CD14-positive monocyte (primary cell): ENCODE measurements at regions of chr18 and their contacts with region 1.

Region 1: GRCh38 chr18:58043491-58044379 is at the start of gene NEDD4L:
- DNase-seq: peak; percentile 62 to 77 (median 63)
- H3K4me3 ChIP-seq: peak within 1 kb of the TSS; percentile 54 to 77 (median 72)
- H3K4me3 Mint-ChIP-seq: peak within 1 kb of the TSS; percentile 99
- H3K27ac ChIP-seq: peak within 1 kb of the TSS in 1 of 2 donors; percentile 45
- H3K27ac Mint-ChIP-seq: peak within 1 kb of the TSS in 6 of 7 donors; percentile 41 to 79 (median 76)
- H3K4me1 ChIP-seq: peaks cover 15 to 28% of the 10 kb centered on the region in 2 donors
- H3K4me1 Mint-ChIP-seq: peaks cover 31% of the 10 kb centered on the region
- H3K27me3 ChIP-seq: peaks cover 5 to 12% of the 10 kb centered on the region in 2 donors
- H3K27me3 Mint-ChIP-seq: peaks cover 26 to 38% (median 29%) of the 10 kb centered on the region in 3 donors
- CTCF ChIP-seq: peak; percentile 88
- polyA plus RNA-seq, gene NEDD4L: 2.5 to 5.2 (median 4.5) TPM

Region 2: DNA sequence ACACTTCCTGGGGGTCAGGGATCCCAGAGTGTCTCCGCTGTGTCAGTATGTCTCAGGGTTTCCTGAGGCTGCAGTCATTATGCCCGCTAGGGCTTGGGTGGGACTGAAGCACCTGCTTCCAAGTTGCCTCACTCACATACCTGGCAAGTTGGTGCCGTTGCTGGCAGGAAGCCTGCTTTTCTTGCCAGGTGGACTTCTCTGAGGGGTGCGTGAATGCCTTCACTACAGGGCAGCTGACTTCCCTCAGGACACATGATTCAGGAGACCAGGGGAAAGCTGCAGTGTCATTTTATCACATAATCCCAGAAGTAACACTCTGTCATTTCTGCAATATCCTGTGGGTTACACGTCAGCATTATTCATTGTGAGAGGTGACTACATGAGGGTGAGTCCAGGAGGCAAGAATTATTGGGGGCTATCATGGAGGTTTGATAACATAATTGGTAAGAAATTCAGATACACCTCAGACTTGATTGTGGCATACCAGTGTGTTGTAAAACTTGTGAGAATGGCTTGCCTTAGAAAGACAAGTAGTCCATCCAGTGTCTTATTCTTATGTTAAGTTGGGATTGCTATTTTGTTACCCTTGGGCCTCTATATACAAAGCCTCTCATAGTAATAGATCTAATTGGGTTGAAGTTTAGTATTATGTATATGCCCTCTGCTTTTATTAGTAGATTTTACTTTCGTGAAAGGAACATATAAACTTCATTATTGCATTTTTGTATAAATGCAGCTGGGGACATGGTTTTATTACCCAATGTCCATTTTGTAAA is 44.4 kb after region 1 on chr18:
- intact Hi-C with region 1: loop called in 1 of 2 experiments (anchors 5 kb)
- DNase-seq: peak; percentile 74 to 91 (median 82)
- H3K4me3 ChIP-seq: peak overlapping the region in 1 of 3 experiments; percentile 56
- H3K4me3 Mint-ChIP-seq: peak overlapping the region; percentile 57 to 89
- H3K27ac ChIP-seq: peak overlapping the region; percentile 58 to 83
- H3K27ac Mint-ChIP-seq: peak overlapping the region; percentile 86 to 96 (median 93)
- H3K4me1 ChIP-seq: peaks cover 54% of the 10 kb centered on the region in 2 donors
- H3K4me1 Mint-ChIP-seq: peaks cover 54% of the 10 kb centered on the region
- H3K27me3 ChIP-seq: no peaks in the 10 kb centered on the region
- H3K27me3 Mint-ChIP-seq: peaks cover 0 to 2% (median 0%) of the 10 kb centered on the region in 3 donors
- CTCF ChIP-seq: no peak

Region 3: GRCh38 chr18:58117786-58118403 is 74.2 kb after region 1 on chr18:
- intact Hi-C with region 1: loop called (anchors 1 to 2 kb)
- DNase-seq: peak; percentile 15 to 61 (median 60)
- H3K4me3 ChIP-seq: no peak overlapping the region
- H3K4me3 Mint-ChIP-seq: no peak overlapping the region
- H3K27ac ChIP-seq: no peak overlapping the region
- H3K27ac Mint-ChIP-seq: peak overlapping the region in 2 of 7 donors; percentile 10 to 60
- H3K4me1 ChIP-seq: no peaks in the 10 kb centered on the region
- H3K4me1 Mint-ChIP-seq: peaks cover 3% of the 10 kb centered on the region
- H3K27me3 ChIP-seq: no peaks in the 10 kb centered on the region
- H3K27me3 Mint-ChIP-seq: peaks cover 4 to 9% (median 9%) of the 10 kb centered on the region in 3 donors
- CTCF ChIP-seq: no peak

Region 4: DNA sequence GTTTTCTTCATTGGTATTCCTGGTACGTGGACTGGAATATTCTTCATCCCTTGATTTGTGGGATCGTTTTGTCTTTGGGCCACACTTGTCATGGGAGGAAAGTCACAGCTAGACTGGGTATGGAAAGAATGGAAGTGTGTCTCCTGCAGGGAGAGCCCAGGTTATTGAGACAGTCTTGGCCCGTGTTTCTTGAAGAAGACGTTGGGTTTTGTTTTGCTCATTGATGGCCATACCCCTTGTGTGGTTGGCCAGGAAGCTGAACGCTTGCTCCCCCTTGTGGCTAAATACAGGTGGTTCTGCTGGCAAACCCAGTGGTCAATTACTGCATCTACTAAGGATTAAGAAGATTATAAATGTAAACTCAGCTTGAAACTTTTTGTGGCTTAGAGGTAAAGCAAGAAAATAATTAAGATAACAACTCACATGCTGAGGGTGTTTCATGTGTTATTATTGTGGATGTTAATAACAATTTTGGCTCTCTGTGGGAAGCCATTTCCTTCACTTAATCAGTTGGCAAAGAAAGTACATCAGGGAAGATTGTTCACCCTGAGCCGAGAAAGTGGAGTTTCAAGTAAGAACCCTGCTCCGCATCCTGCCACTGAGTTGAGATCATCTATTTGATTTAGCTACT is 92.1 kb after region 1 on chr18:
- intact Hi-C with region 1: loop called in 1 of 2 experiments (anchors 5 kb)
- DNase-seq: peak; percentile 52 to 60 (median 58)
- H3K4me3 ChIP-seq: no peak overlapping the region
- H3K4me3 Mint-ChIP-seq: peak overlapping the region in 1 of 2 donors; percentile 22
- H3K27ac ChIP-seq: no peak overlapping the region
- H3K27ac Mint-ChIP-seq: no peak overlapping the region
- H3K4me1 ChIP-seq: no peaks in the 10 kb centered on the region
- H3K4me1 Mint-ChIP-seq: peaks cover 5% of the 10 kb centered on the region
- H3K27me3 ChIP-seq: no peaks in the 10 kb centered on the region
- H3K27me3 Mint-ChIP-seq: peaks cover 5 to 6% (median 5%) of the 10 kb centered on the region in 3 donors
- CTCF ChIP-seq: peak; percentile 88